Activated T-helper 1 cell treated with anti-CD3 and anti-CD28 coated beads, Interleukin-12 subunit alpha, Interleukin-12 subunit beta, Interleukin-2, Interleukin-4 antibody, amounts not matched to agents 30 ng/mL and 10 ng/mL and 1 ng/mL, durations not matched to agents 14 hours and 24 hours and 36 hours (primary cell): ENCODE measurements at regions of chr14 and their contacts with region 1.

Region 1: GRCh38 chr14:102591889-102592763 is at the start of gene RCOR1:
- DNase-seq: peak; percentile 95
- H3K4me3 Mint-ChIP-seq: peak within 1 kb of the TSS; percentile 94
- H3K27ac Mint-ChIP-seq: peak within 1 kb of the TSS; percentile 96
- H3K4me1 Mint-ChIP-seq: peaks cover 18% of the 10 kb centered on the region
- H3K27me3 Mint-ChIP-seq: no peaks in the 10 kb centered on the region
- total RNA-seq, gene RCOR1: 23.9 and 25.2 TPM in 2 replicates

Region 2: DNA sequence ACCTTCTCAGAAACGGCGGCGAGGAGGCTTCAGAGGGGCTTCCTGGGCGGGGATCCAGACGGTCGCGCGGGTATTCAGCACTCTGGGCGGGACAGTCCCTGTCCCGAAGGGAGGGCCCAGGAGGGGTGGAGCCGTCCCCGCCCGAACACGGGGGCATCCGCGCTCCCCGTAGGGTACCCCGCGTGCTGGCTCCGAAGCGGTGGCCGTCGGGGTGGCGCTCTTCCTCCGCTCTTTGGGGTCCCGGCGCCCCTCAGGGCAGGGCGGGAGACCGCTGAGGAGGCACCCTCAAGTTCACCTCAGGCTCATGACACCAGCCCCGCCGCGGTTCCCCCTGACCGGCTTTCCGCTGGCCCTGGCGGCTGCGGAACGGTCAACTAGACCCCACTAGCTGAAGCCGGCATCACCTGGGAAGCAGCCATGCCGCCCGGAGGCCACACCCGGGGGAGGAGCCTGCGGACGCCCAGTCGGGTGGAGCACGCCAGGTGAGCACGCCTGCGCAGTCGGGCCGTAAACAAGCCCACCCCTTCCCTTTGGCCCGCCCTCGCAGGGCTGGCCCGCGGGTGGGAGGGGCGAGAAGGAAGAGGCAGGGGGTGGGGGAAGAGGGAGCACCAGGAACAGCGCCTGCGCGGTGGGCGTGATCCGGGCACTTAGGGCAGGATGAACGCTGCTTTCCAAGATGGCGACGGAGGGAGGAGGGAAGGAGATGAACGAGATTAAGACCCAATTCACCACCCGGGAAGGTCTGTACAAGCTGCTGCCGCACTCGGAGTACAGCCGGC is 452.7 kb before region 1 on chr14 and contains the start of gene WDR20:
- intact Hi-C with region 1: loop called (anchors 1 kb)
- DNase-seq: peak; percentile 99
- H3K4me3 Mint-ChIP-seq: peak within 1 kb of the TSS; percentile 94
- H3K27ac Mint-ChIP-seq: peak within 1 kb of the TSS; percentile 91
- H3K4me1 Mint-ChIP-seq: peaks cover 19% of the 10 kb centered on the region
- H3K27me3 Mint-ChIP-seq: no peaks in the 10 kb centered on the region
- total RNA-seq, gene WDR20: 33.9 and 34.2 TPM in 2 replicates

Region 3: DNA sequence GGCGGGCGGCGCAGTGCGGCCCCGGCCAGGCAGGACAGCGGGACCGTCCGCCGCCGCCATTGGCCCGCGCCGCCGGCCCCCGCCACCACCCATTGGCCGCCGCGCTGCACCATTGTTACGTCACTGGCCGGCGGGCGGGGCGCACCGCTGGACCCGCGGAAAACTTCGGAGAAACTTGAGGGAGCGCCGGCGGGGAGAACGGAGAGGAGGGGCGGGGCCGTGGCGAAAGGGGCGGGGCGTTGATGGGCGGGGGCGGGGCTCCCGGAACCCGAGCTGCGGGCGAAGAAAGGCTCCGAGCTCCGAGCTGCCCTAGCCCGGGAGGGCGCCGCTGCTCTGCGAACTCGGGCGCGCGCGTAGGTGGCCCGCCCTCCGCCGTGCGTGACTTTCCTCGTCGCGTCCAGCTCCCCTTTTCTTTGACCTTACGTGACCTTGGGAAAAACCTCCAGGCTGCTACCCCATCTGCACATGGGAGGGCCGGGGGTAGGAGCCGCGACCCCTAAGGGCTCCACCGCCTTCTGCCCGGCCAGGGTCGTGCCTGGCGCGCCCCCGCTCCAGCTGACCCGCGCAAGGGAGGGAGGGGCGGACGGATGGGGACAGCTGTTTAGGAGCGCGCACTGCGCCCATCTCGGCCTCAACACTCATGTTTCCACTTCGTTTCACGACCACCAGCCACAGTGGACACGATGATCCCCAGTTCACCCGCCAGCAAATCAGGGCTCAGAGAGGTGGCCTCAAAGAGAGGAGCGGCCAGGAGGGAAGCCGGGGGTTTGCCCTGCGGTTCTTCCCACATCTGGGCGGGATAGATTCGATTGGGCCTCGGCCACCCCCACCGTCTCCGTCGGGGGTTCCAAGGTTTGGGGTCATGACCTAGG is 82.1 kb before region 1 on chr14 and contains the start of gene ANKRD9:
- intact Hi-C with region 1: loop called (anchors 1 kb)
- DNase-seq: peak; percentile 89
- H3K4me3 Mint-ChIP-seq: peak within 1 kb of the TSS; percentile 84
- H3K27ac Mint-ChIP-seq: peak within 1 kb of the TSS; percentile 55
- H3K4me1 Mint-ChIP-seq: peaks cover 14% of the 10 kb centered on the region
- H3K27me3 Mint-ChIP-seq: no peaks in the 10 kb centered on the region
- total RNA-seq, gene ANKRD9: 13.4 TPM in 2 replicates

Region 4: DNA sequence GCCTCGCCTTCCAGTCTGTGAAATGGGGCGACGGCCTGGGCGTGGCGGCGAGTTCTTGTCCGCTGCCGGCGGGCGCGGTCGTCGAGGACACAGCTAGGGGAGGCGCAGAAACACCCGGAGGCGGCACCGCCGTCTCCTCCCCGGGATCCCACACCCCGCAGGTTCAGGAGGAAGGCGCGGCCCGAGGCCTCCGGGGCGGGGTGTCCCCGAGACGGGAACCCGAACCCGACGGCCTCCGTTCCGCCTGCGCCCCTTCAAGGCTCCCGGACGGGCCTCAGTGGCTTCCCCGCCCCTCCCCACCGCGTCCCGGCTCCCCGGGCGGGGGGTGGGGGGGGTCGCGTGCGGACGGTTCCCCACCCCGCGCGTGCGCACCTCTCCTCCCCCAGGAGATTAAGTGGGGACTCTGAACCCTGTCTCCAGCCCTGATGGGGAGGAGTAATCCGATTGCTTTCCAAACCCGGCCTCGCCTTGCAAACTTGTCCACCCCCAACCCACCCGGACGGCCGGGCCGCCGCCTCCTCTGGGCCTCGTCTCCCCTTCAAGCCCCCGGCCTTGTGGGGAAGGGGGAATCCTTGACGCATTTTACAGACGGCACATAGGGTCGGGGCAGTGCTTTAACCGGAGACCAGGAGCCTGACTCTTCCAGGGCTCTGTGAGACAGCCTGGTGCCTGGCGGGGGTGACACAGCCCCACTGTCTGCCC is 47.2 kb before region 1 on chr14:
- intact Hi-C with region 1: no loop called
- DNase-seq: peak; percentile 48
- H3K4me3 Mint-ChIP-seq: peak overlapping the region; percentile 65
- H3K27ac Mint-ChIP-seq: no peak overlapping the region
- H3K4me1 Mint-ChIP-seq: no peaks in the 10 kb centered on the region
- H3K27me3 Mint-ChIP-seq: peaks cover 38% of the 10 kb centered on the region

Region 5: DNA sequence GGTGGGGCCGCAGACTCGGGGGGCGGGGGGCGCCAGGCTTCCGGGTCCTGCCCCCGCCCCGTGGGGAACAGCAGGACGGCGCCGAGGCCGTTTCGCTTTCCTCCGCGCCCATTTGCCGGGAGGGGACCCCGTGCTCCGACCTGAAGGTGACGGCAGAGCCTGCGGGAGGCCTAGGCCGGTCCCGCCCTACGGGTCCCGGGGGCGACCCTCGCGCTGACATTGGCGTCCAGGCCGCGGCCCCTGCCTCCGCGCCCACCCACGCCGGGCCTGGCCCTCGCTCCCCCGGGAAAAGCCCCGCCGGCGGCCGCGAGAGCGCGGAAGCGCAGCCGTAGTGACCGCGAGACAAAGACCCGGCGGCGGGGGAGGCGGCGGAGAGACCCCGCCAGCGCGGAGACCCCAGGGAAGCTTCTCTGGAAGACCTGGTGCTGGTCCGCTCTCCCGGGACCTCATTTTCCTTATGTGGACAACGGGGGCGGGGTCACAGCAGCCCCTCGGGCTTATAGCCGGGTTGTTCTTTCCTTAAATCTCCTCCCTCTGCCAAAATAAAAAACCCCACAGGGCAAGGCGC is 36.8 kb before region 1 on chr14:
- intact Hi-C with region 1: loop called (anchors 1 kb)
- DNase-seq: peak; percentile 61
- H3K4me3 Mint-ChIP-seq: peak overlapping the region; percentile 76
- H3K27ac Mint-ChIP-seq: peak overlapping the region; percentile 58
- H3K4me1 Mint-ChIP-seq: no peaks in the 10 kb centered on the region
- H3K27me3 Mint-ChIP-seq: no peaks in the 10 kb centered on the region

Region 6: GRCh38 chr14:102774391-102775153 is 182.4 kb after region 1 on chr14:
- intact Hi-C with region 1: loop called (anchors 2 kb)
- DNase-seq: peak; percentile 57
- H3K4me3 Mint-ChIP-seq: peak overlapping the region; percentile 24
- H3K27ac Mint-ChIP-seq: peak overlapping the region; percentile 90
- H3K4me1 Mint-ChIP-seq: peaks cover 40% of the 10 kb centered on the region
- H3K27me3 Mint-ChIP-seq: no peaks in the 10 kb centered on the region

Region 7: DNA sequence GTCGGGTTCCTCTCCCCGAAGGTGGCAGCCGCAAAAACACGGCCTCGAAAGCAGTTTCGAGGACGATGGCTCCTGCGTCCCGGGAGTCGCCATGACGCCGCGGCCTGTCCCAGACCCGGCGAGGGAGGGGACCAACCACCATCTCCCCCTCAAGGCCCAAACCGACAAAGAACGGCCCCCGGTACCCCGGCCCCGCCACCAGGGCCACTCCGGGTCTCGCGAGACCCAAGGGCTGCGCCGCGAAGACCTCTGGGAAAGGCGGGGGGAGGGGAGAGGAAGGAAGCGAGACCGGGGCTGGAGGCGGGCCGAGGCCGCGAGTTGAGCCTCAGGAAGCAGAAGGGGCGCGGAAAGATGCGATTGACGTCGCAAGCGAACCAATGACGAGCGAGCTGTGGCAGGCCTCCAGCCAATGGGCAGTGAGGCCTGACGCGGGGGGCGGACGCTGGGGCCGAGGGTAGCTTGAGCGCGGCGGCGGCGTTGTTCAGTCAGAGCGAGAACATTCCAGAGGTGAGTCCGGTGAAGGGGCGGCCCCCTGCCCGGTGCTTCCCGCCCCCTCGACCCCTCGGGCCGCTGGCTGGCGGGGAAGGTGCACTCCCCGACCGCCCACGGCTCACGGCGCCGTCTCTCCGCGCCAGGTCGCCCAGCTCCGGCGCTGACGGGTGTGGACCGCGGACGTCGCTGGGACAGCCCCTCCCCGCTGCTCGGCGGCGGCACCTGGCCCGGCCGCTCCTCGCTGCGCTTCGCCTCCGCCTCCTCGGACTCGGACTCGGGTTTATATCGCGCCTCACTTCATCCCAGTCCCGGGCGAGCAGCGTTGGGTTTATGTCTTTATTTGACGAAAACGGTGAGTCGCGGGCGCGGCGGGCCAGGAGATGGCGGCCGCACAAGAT is 741.9 kb after region 1 on chr14 and contains the start of gene EIF5:
- intact Hi-C with region 1: loop called (anchors 5 kb)
- DNase-seq: peak; percentile 98
- H3K4me3 Mint-ChIP-seq: peak within 1 kb of the TSS; percentile 90
- H3K27ac Mint-ChIP-seq: peak within 1 kb of the TSS; percentile 97
- H3K4me1 Mint-ChIP-seq: peaks cover 43% of the 10 kb centered on the region
- H3K27me3 Mint-ChIP-seq: peaks cover 7% of the 10 kb centered on the region
- total RNA-seq, gene EIF5: 279 and 292 TPM in 2 replicates